Activated CD8-positive, alpha-beta T cell treated with anti-CD3 and anti-CD28 coated beads for 36 hours (primary cell): ENCODE measurements at regions of chr12 and their contacts with region 1.

Region 1: DNA sequence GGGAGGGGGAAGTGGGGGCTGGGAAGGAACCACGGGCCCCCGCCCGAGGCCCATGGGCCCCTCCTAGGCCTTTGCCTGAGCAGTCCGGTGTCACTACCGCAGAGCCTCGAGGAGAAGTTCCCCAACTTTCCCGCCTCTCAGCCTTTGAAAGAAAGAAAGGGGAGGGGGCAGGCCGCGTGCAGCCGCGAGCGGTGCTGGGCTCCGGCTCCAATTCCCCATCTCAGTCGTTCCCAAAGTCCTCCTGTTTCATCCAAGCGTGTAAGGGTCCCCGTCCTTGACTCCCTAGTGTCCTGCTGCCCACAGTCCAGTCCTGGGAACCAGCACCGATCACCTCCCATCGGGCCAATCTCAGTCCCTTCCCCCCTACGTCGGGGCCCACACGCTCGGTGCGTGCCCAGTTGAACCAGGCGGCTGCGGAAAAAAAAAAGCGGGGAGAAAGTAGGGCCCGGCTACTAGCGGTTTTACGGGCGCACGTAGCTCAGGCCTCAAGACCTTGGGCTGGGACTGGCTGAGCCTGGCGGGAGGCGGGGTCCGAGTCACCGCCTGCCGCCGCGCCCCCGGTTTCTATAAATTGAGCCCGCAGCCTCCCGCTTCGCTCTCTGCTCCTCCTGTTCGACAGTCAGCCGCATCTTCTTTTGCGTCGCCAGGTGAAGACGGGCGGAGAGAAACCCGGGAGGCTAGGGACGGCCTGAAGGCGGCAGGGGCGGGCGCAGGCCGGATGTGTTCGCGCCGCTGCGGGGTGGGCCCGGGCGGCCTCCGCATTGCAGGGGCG is at the start of gene GAPDH:
- DNase-seq: peak; percentile 94
- ATAC-seq: peak; percentile 55
- H3K4me3 Mint-ChIP-seq: peak within 1 kb of the TSS; percentile 93
- H3K27ac Mint-ChIP-seq: peak within 1 kb of the TSS; percentile 99
- H3K4me1 Mint-ChIP-seq: peaks cover 37% of the 10 kb centered on the region
- H3K27me3 Mint-ChIP-seq: no peaks in the 10 kb centered on the region
- CTCF ChIP-seq: no peak
- total RNA-seq, gene GAPDH: 9,109 to 9,234 TPM

Region 2: GRCh38 chr12:6335451-6336078 is 198.5 kb before region 1 on chr12:
- CTCF ChIA-PET with region 1: interaction called, 5 read pairs
- POLR2A ChIA-PET with region 1: interaction called, 4 read pairs
- intact Hi-C with region 1: loop called (anchors 10 kb)
- DNase-seq: peak; percentile 96
- ATAC-seq: peak; percentile 71
- H3K4me3 Mint-ChIP-seq: no peak overlapping the region
- H3K27ac Mint-ChIP-seq: no peak overlapping the region
- H3K4me1 Mint-ChIP-seq: peaks cover 52% of the 10 kb centered on the region
- H3K27me3 Mint-ChIP-seq: no peaks in the 10 kb centered on the region
- CTCF ChIP-seq: peak; percentile 48

Region 3: DNA sequence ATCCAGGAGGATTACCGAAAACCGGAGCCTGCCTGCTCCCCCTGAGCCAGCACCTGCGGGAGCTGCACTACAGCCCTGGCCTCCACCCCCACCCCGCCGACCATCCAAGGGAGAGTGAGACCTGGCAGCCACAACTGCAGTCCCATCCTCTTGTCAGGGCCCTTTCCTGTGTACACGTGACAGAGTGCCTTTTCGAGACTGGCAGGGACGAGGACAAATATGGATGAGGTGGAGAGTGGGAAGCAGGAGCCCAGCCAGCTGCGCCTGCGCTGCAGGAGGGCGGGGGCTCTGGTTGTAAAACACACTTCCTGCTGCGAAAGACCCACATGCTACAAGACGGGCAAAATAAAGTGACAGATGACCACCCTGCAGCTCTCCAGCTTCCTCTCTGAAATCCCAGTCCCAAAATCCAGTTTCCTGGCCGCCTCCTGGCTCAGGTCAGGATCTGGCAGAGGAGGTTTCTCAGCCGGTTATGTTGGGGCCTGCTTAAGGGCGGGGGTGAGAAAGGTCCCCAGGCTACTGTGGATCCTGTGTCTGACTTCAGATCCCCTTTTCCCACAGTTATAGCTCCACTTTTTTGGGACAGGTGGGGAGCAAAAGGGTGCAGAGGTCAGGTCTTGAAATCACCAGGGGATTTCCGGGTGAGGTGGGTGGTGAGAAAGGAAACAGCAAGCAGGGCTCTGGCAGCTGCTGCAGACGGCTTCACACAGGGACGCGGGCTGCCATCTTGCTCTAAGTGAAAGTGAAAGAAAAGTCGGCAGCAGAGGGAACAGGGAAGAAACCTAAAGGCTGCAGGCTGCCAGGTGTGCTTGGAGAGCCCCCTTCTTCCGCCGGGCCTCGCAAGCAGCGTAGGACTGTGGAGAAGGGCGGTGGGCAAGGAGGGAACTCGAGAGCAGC is 82.5 kb before region 1 on chr12 and contains the start of gene TAPBPL:
- CTCF ChIA-PET with region 1: interaction called, 4 read pairs
- POLR2A ChIA-PET with region 1: interaction called, 81 read pairs
- intact Hi-C with region 1: no loop called
- DNase-seq: peak; percentile 94
- ATAC-seq: peak; percentile 77
- H3K4me3 Mint-ChIP-seq: peak within 1 kb of the TSS; percentile 97
- H3K27ac Mint-ChIP-seq: peak within 1 kb of the TSS; percentile 99
- H3K4me1 Mint-ChIP-seq: peaks cover 53% of the 10 kb centered on the region
- H3K27me3 Mint-ChIP-seq: no peaks in the 10 kb centered on the region
- CTCF ChIP-seq: no peak
- total RNA-seq, gene TAPBPL: 23.3 to 28.0 TPM

Region 4: DNA sequence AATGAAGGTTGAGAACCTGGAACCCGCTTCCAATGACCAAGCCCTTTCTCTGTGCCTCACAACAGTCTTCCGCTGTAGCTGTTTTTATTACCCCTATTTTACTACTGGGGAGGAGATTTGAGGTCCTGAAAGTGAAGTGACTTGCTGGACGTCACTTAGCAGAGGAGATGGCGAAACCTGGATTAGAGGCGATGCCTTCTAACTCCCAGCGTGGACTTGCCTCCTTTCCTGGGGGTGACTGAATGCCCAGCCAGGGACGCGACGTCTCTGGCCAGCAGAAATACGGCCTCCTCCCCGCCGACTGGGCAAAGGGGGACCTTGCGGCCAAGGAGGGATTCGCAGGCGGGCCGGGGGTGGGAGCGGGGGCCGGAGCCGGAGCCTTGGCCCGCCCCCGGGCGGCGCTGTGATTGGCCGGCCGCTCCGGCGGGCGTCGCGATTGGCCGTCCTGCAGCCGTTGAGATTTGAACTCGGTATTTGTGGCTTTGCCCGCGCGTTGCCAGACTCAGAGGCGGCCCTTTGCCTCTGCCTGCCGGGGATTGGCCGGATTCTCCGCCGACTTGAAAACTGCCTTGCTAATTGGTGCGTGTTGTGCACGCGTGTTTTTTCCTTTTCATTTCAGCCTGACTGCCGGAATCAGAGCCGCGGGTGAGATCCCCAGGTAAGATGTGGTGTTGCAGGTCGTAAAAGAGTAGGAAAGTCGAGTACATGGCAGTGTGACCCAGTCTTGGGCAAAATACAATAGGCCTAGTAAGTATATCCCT is 40.4 kb before region 1 on chr12 and contains the start of gene NCAPD2:
- CTCF ChIA-PET with region 1: interaction called, 10 read pairs
- POLR2A ChIA-PET with region 1: interaction called, 15 read pairs
- intact Hi-C with region 1: loop called (anchors 5 kb)
- DNase-seq: peak; percentile 98
- ATAC-seq: peak; percentile 88
- H3K4me3 Mint-ChIP-seq: peak within 1 kb of the TSS; percentile 99
- H3K27ac Mint-ChIP-seq: peak within 1 kb of the TSS; percentile 99
- H3K4me1 Mint-ChIP-seq: peaks cover 31% of the 10 kb centered on the region
- H3K27me3 Mint-ChIP-seq: no peaks in the 10 kb centered on the region
- CTCF ChIP-seq: no peak
- total RNA-seq, gene NCAPD2: 195 to 196 TPM

Region 5: GRCh38 chr12:6554168-6555017 is 20.3 kb after region 1 on chr12:
- CTCF ChIA-PET with region 1: interaction called, 68 read pairs
- POLR2A ChIA-PET with region 1: interaction called, 264 read pairs
- intact Hi-C with region 1: no loop called
- DNase-seq: peak; percentile 89
- ATAC-seq: peak; percentile 76
- H3K4me3 Mint-ChIP-seq: peak overlapping the region; percentile 89
- H3K27ac Mint-ChIP-seq: peak overlapping the region; percentile 51
- H3K4me1 Mint-ChIP-seq: peaks cover 50% of the 10 kb centered on the region
- H3K27me3 Mint-ChIP-seq: no peaks in the 10 kb centered on the region
- CTCF ChIP-seq: peak; percentile 62

Region 6: GRCh38 chr12:6620137-6620884 is 86.2 kb after region 1 on chr12:
- CTCF ChIA-PET with region 1: no interaction called
- POLR2A ChIA-PET with region 1: no interaction called
- intact Hi-C with region 1: no loop called
- DNase-seq: peak; percentile 65
- ATAC-seq: peak; percentile 78
- H3K4me3 Mint-ChIP-seq: peak overlapping the region; percentile 72
- H3K27ac Mint-ChIP-seq: peak overlapping the region; percentile 69
- H3K4me1 Mint-ChIP-seq: peaks cover 8% of the 10 kb centered on the region
- H3K27me3 Mint-ChIP-seq: no peaks in the 10 kb centered on the region
- CTCF ChIP-seq: peak; percentile 77

Region 7: DNA sequence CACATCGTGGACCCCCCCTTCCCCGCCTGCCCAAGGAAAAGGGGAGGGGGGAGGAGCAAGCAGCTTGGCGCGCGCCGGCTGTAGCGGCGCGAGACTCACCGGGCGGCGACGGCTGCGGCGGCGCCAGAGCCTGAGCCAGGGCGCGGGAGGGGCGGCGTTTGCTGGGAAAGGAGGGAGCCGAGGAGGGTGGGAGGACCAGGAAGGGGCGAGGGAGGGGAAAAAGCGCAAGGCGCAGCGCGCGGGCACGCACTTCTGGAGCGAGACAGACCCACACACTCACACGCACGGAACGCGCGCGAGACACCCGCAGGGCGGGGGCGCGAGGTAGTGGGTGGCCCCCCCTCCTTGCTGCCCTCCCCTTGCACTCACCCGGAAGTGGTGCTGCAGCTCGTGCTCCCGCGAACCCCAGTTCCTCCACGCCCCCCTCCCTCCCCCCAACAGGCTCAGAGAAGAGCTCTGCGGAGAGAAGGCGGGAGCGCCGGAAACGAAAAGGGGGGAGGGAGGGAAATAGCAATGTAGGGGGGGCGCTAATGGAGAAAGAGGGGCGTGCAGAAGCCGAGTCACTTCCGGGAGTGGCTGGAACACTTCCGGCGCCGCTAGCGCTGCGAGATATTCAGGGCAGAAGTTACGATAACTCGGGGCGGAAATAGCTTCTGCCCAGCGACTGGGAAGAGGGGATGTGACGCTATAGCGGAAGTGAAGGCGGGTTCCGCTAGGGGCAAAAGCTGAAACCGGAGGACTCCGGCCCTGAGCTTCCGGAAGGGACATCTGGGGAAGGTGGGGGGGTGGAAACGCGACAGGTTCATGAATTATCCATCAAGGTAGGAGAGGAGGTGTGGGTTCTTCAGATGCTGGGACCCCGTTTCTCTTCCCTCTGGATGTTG is 155.1 kb after region 1 on chr12 and contains the start of gene ZNF384:
- CTCF ChIA-PET with region 1: no interaction called
- POLR2A ChIA-PET with region 1: interaction called, 10 read pairs
- intact Hi-C with region 1: no loop called
- DNase-seq: peak; percentile 97
- ATAC-seq: peak; percentile 83
- H3K4me3 Mint-ChIP-seq: peak within 1 kb of the TSS; percentile 86
- H3K27ac Mint-ChIP-seq: peak within 1 kb of the TSS; percentile 97
- H3K4me1 Mint-ChIP-seq: peaks cover 45% of the 10 kb centered on the region
- H3K27me3 Mint-ChIP-seq: no peaks in the 10 kb centered on the region
- CTCF ChIP-seq: no peak
- total RNA-seq, gene ZNF384: 55.2 to 56.7 TPM